Dorsolateral prefrontal cortex (tissue), 120 donors: ENCODE measurements at regions of chr1 and their contacts with region 1.

Region 1: GRCh38 chr1:226547754-226548191 is 791 bp upstream of the STUM start:
- DNase-seq: peak; percentile 59 to 85 (median 78)
- H3K4me3 ChIP-seq: peak overlapping the region in 41 of 59 donors; percentile 14 to 73 (median 66)
- H3K27ac ChIP-seq: peak overlapping the region in 2 of 59 donors; percentile 11 to 63
- H3K27me3 ChIP-seq: peaks cover 0 to 6% (median 0%) of the 10 kb centered on the region in 45 donors
- CTCF ChIP-seq: peak; percentile 59 to 88 (median 76)

Region 2: DNA sequence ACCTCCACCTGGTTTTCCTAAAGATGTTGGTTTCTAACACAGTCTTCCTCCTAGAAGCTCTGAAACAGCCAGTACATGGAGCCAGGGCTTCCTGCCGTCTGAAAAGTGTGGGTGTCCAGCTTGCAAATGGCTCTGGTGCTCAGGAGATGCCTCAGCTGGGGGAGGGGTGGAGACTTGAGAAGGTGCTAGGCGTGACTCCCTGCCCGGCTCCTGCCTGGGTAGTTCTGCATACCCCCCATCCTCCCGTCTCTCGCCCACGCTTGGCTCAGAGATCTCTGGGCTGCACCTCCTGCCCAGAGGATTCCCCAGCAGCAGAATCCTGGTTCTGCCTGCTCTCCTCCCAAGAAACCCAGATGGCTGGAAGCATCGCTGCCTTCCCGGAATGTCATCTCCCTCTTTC is 17.7 kb after region 1 on chr1:
- intact Hi-C with region 1: loop called in 1 of 2 experiments (anchors 2 kb)
- DNase-seq: peak in 6 of 10 donors; percentile 49 to 83 (median 78)
- H3K4me3 ChIP-seq: peak overlapping the region in 2 of 59 donors; percentile 2 to 3
- H3K27ac ChIP-seq: peak overlapping the region in 38 of 59 donors; percentile 2 to 87 (median 53)
- H3K27me3 ChIP-seq: no peaks in the 10 kb centered on the region
- CTCF ChIP-seq: no peak

Region 3: DNA sequence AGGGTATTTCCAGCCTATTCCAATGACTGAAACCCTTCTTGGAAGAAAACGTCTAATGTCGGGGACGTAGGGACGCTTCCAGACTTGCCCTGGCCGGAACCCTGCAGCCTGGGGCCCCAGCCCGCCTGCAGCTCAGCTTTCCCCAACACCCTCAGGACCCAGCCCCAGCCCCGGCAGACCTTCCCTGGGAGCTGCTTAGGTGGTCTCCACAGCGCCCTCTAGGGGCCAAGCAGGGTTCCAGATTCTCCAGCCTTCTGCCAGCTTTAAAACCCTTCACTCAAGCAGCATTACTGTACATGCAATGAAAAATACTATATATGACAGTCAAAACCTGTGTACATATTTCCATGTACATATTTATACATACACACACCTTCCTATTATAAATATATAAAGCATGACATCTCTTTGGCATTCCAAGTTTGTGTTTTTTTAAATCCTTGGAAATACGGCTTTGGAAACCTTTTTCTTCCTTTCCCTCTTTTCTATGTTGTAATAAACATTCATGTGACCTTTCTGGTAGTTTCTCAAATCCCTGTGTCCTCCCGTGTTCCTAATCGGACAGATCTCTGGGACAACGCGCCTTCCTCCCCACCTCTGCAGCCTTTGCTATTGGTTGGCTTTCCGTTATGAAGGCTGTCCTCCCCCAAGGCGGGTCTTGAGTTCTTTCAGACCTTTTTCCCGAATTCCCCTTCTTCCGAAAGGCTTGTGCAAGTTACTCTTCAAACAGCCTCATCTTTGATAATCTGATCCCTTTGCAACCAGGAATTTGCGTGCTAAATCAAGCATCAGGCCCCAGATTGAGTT is 61.1 kb after region 1 on chr1:
- intact Hi-C with region 1: loop called (anchors 1 to 5 kb)
- DNase-seq: peak in 9 of 10 donors; percentile 42 to 76 (median 68)
- H3K4me3 ChIP-seq: no peak overlapping the region
- H3K27ac ChIP-seq: no peak overlapping the region
- H3K27me3 ChIP-seq: no peaks in the 10 kb centered on the region
- CTCF ChIP-seq: peak; percentile 59 to 89 (median 82)